K562 (cell line): ENCODE measurements at regions of chr2 and their contacts with region 1.

Region 1: GRCh38 chr2:203909261-203909967 is 27.1 kb upstream of the ICOS start:
- DNase-seq: peak in 3 of 4 experiments; percentile 7 to 13 (median 7)
- ATAC-seq: peak; percentile 49; the same call in 1 of the 3 replicates
- H3K4me3 ChIP-seq: no peak overlapping the region
- H3K27ac ChIP-seq: no peak overlapping the region
- H3K4me1 ChIP-seq: no peaks in the 10 kb centered on the region
- H3K27me3 ChIP-seq: no peaks in the 10 kb centered on the region; a peak in 1 of 5 replicates
- CTCF ChIP-seq: peak; percentile 22 to 54 (median 45); a peak in 4 of 6 replicates
- EP300 ChIP-seq: no peak
- POLR2A ChIP-seq: no peak
- RAD21 ChIP-seq: peak; percentile 33 to 59

Region 2: GRCh38 chr2:203759690-203760365 is 149.6 kb before region 1 on chr2:
- CTCF ChIA-PET with region 1: no interaction called
- POLR2A ChIA-PET with region 1: no interaction called
- in situ Hi-C with region 1: no loop called
- intact Hi-C with region 1: loop called (anchors 5 kb)
- DNase-seq: no peak
- ATAC-seq: no peak
- H3K4me3 ChIP-seq: no peak overlapping the region
- H3K27ac ChIP-seq: no peak overlapping the region
- H3K4me1 ChIP-seq: no peaks in the 10 kb centered on the region
- H3K27me3 ChIP-seq: no peaks in the 10 kb centered on the region
- CTCF ChIP-seq: no peak
- EP300 ChIP-seq: no peak
- POLR2A ChIP-seq: no peak
- RAD21 ChIP-seq: no peak

Region 3: DNA sequence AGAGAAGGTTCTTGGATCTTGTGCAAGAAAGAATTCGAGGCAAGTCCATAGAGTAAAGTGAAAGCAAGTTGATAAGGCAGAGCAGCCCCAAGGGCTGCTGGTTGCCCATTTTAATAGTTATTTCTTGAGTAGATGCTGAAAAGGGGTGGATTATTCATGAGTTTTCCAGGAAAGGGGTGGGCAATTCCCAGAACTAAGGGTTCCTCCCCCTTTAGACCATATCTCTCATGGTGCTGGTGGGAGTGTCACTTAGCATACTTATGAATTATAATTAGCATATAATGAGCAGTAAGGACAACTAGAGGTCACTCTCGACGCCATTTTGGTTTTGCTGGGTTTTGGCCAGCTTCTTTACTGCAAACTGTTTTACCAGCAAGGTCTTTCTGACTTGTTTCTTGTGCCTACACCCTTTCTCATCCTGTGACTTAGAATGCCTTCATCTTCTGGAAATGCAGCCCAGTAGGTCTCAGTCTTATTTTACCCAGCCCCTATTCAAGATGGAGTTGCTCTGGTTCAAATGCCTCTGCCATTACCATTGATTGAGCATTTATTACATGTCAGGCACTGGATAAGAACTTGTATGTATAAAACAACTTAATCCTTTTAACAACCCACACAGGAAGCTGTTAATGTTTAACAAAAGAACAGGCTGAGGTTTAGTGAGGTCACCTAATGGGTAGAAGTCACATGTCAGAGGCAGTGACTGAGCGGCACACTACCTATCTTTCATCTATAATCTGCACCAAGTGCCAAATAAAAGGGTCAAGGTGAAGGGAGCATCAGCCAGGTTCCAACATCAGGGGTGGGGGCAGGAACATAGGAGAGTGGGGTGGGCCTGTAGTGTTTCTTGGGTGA is 278.0 kb after region 1 on chr2:
- CTCF ChIA-PET with region 1: no interaction called
- POLR2A ChIA-PET with region 1: no interaction called
- in situ Hi-C with region 1: no loop called
- intact Hi-C with region 1: no loop called
- DNase-seq: peak in 1 of 4 experiments; percentile 6
- ATAC-seq: no peak
- H3K4me3 ChIP-seq: no peak overlapping the region
- H3K27ac ChIP-seq: no peak overlapping the region
- H3K4me1 ChIP-seq: no peaks in the 10 kb centered on the region
- H3K27me3 ChIP-seq: no peaks in the 10 kb centered on the region
- CTCF ChIP-seq: no peak
- EP300 ChIP-seq: no peak
- POLR2A ChIP-seq: no peak
- RAD21 ChIP-seq: no peak